CD4-positive, alpha-beta T cell (primary cell): ENCODE measurements at regions of chr9 and their contacts with region 1.

Region 1: DNA sequence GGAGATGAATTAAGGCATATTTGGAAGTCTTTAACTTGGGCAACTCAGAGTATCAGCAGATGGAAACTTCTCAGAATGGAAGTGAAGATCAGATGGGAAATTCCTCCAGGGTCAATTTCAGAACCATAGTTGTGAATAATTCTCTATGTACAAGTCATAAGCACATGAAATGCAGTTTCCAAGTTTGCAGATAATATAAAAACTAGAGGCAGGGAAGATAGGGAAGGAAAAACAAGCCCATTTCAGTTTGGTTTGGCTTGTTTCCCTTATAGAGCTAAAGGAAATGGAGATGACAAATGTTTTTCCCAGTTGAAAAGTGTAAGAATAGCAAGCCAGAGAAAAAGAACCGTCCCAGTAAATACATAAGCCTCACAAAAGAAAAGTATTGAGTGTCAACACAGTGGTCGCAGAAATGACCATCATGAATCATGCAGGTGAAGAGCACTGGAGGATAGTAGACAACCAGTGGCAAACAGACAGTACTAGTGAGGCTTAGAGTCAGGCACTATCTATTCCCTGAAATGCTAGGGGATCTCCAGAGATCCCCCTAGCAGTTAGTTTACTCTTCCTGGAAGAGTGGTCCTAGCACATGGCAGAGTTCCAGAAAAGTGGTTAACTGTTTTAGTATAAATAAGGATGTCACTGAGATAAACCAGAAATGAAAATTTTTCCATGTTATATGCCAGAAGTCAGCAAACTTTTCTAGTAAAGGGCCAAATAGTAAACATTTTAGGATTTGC is 245.9 kb downstream of the SAXO1 start:
- DNase-seq: no peak
- ATAC-seq: no peak
- H3K4me3 ChIP-seq: no peak overlapping the region
- H3K4me3 Mint-ChIP-seq: no peak overlapping the region
- H3K27ac ChIP-seq: no peak overlapping the region
- H3K27ac Mint-ChIP-seq: no peak overlapping the region
- H3K4me1 ChIP-seq: no peaks in the 10 kb centered on the region
- H3K4me1 Mint-ChIP-seq: no peaks in the 10 kb centered on the region
- H3K27me3 ChIP-seq: no peaks in the 10 kb centered on the region
- H3K27me3 Mint-ChIP-seq: peaks cover 6% of the 10 kb centered on the region
- CTCF ChIP-seq: no peak

Region 2: GRCh38 chr9:18849890-18850677 is 63.0 kb after region 1 on chr9:
- CTCF ChIA-PET with region 1: no interaction called
- POLR2A ChIA-PET with region 1: no interaction called
- intact Hi-C with region 1: loop called in 1 of 2 experiments (anchors 10 kb)
- DNase-seq: no peak
- ATAC-seq: no peak
- H3K4me3 ChIP-seq: no peak overlapping the region
- H3K4me3 Mint-ChIP-seq: no peak overlapping the region
- H3K27ac ChIP-seq: no peak overlapping the region
- H3K27ac Mint-ChIP-seq: no peak overlapping the region
- H3K4me1 ChIP-seq: no peaks in the 10 kb centered on the region
- H3K4me1 Mint-ChIP-seq: no peaks in the 10 kb centered on the region
- H3K27me3 ChIP-seq: no peaks in the 10 kb centered on the region
- H3K27me3 Mint-ChIP-seq: no peaks in the 10 kb centered on the region
- CTCF ChIP-seq: no peak

Region 3: DNA sequence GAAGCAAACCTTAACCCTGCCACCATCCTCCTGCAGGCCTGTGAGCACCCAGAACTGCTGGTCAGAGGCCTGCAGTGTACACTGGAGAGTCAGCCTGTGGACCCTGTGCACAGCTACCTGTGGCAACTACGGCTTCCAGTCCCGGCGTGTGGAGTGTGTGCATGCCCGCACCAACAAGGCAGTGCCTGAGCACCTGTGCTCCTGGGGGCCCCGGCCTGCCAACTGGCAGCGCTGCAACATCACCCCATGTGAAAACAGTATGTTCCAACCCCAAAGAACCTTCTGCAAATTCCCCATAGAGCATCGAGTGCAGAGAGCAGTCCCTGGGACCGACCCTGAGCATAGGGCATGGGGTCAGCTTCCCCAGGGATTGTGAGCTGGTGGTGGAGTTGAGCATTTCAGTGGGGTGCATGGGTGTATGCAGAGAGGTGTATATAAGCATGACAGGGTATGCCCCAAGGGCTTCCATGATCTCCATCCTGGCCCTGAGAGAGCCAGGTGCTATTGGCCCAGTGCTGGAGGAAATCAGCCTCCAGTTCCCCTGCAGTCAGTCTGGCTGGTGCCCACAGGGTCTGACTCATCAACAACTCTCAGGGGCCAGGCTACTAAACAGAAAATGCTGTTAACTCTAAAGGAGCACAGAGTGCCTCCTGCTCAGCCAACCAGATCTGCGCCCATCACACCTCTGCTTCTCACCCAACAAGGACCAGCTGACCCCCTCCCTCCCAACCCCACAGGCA is 119.7 kb after region 1 on chr9:
- CTCF ChIA-PET with region 1: no interaction called
- POLR2A ChIA-PET with region 1: no interaction called
- intact Hi-C with region 1: no loop called
- DNase-seq: no peak
- ATAC-seq: no peak
- H3K4me3 ChIP-seq: no peak overlapping the region
- H3K4me3 Mint-ChIP-seq: no peak overlapping the region
- H3K27ac ChIP-seq: no peak overlapping the region
- H3K27ac Mint-ChIP-seq: no peak overlapping the region
- H3K4me1 ChIP-seq: no peaks in the 10 kb centered on the region
- H3K4me1 Mint-ChIP-seq: no peaks in the 10 kb centered on the region
- H3K27me3 ChIP-seq: no peaks in the 10 kb centered on the region
- H3K27me3 Mint-ChIP-seq: peaks cover 9% of the 10 kb centered on the region
- CTCF ChIP-seq: no peak